Natural killer cell (primary cell): ENCODE measurements at regions of chr9 and their contacts with region 1.

Region 1: GRCh38 chr9:114291064-114291474 is 31.8 kb upstream of the ORM1 start:
- DNase-seq: peak; percentile 62 to 77
- ATAC-seq: peak; percentile 64 to 79 (median 66)
- H3K4me3 ChIP-seq: no peak overlapping the region
- H3K4me3 Mint-ChIP-seq: no peak overlapping the region
- H3K27ac ChIP-seq: no peak overlapping the region
- H3K27ac Mint-ChIP-seq: no peak overlapping the region
- H3K4me1 ChIP-seq: peaks cover 3% of the 10 kb centered on the region
- H3K4me1 Mint-ChIP-seq: peaks cover 0 to 5% of the 10 kb centered on the region in 2 donors
- H3K27me3 ChIP-seq: peaks cover 2% of the 10 kb centered on the region
- H3K27me3 Mint-ChIP-seq: peaks cover 20 to 32% of the 10 kb centered on the region in 2 donors
- CTCF ChIP-seq: peak; percentile 97

Region 2: GRCh38 chr9:114082017-114082762 is 208.9 kb before region 1 on chr9:
- intact Hi-C with region 1: loop called (anchors 1 kb)
- DNase-seq: peak; percentile 69 to 86
- ATAC-seq: peak; percentile 63 to 93 (median 70)
- H3K4me3 ChIP-seq: no peak overlapping the region
- H3K4me3 Mint-ChIP-seq: no peak overlapping the region
- H3K27ac ChIP-seq: no peak overlapping the region
- H3K27ac Mint-ChIP-seq: no peak overlapping the region
- H3K4me1 ChIP-seq: no peaks in the 10 kb centered on the region
- H3K4me1 Mint-ChIP-seq: no peaks in the 10 kb centered on the region
- H3K27me3 ChIP-seq: no peaks in the 10 kb centered on the region
- H3K27me3 Mint-ChIP-seq: peaks cover 0 to 3% of the 10 kb centered on the region in 2 donors
- CTCF ChIP-seq: peak; percentile 88

Region 3: DNA sequence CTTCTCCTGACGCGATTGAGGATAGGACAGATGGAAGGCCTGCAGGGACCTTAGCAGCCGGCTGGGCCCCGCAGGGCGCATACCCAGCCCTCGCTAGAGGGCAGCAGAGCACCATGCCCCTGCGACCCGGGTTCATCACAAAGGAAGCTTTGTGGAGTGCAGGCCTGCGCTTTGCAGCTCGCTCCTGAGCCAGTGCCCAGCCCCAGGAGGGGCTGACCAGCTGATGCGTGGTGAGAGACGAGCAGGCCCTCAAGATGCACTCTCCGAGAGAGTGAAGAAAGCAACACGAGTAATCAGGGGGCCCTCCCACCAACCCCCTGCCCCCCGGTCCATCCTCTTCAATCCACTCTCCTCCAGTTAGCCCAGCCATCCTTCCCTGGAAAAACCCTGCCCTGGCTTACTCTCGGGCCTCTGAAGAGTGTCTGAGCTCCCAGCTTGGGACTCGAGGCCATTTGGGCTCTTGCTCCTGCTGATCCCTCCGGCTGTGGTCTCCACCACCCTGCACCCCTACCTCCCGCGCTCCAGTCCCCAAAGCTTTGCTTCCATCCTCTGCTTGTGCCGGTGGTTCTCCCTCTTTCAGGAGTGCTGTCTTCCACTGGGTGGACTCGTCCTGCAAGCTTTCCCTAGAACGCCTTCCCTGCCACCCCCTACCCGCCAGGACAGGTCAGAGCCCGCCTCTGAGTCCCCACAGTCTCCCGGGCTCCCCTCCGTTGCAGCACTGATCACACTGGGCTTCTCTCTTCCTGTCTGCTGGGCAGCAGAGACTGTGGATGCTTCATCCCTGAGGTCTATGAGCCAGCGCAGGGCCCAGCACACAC is 182.8 kb before region 1 on chr9:
- intact Hi-C with region 1: loop called (anchors 5 kb)
- DNase-seq: peak in 1 of 2 donors; percentile 67
- ATAC-seq: peak; percentile 36 to 76 (median 62)
- H3K4me3 ChIP-seq: no peak overlapping the region
- H3K4me3 Mint-ChIP-seq: no peak overlapping the region
- H3K27ac ChIP-seq: no peak overlapping the region
- H3K27ac Mint-ChIP-seq: no peak overlapping the region
- H3K4me1 ChIP-seq: no peaks in the 10 kb centered on the region
- H3K4me1 Mint-ChIP-seq: no peaks in the 10 kb centered on the region
- H3K27me3 ChIP-seq: no peaks in the 10 kb centered on the region
- H3K27me3 Mint-ChIP-seq: peaks cover 24 to 25% of the 10 kb centered on the region in 2 donors
- CTCF ChIP-seq: peak; percentile 47

Region 4: DNA sequence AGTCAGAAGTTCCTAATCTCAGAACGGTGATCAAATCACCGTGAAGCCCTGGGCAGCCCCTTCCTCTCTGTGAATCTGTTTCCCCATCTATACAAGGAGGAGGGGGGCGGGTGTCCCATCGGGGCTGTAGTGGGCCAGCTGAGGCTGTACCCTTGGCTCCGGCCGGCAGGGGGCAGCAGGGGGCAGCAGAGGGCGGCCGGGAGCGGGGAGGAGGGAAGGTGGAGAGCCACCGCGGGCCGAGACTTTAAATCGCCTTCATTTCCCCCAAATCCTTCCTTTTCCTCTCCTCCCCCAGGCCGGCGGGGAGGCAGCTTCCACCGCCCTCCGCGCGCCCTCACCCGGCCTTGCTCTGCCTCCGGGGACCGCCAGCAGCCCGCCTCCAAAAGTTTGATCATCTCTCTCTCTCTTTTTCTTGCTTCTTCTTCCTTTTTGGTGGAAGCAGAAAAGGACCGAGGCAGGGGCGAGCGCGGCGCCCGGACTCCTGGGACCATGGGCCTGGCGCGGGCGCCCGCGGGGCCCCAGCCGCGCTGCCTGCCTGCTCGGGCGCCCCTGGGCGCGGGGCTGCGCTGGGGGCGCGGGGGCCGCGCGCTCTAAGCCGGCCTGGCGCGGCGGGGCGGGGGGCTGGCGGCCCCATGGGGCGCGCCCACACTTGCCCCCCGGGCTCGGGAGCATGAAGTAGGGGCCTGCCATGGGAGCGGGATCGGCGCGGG is 135.7 kb before region 1 on chr9 and contains the start of gene COL27A1:
- intact Hi-C with region 1: loop called (anchors 2 kb)
- DNase-seq: peak; percentile 66 to 79
- ATAC-seq: peak; percentile 86 to 98 (median 97)
- H3K4me3 ChIP-seq: peak within 1 kb of the TSS; percentile 34
- H3K4me3 Mint-ChIP-seq: peak within 1 kb of the TSS; percentile 89
- H3K27ac ChIP-seq: no peak within 1 kb of the TSS
- H3K27ac Mint-ChIP-seq: no peak within 1 kb of the TSS
- H3K4me1 ChIP-seq: peaks cover 18% of the 10 kb centered on the region
- H3K4me1 Mint-ChIP-seq: peaks cover 11 to 18% of the 10 kb centered on the region in 2 donors
- H3K27me3 ChIP-seq: peaks cover 30% of the 10 kb centered on the region
- H3K27me3 Mint-ChIP-seq: peaks cover 43 to 56% of the 10 kb centered on the region in 2 donors
- CTCF ChIP-seq: peak; percentile 72
- total RNA-seq, gene COL27A1: not detected

Region 5: DNA sequence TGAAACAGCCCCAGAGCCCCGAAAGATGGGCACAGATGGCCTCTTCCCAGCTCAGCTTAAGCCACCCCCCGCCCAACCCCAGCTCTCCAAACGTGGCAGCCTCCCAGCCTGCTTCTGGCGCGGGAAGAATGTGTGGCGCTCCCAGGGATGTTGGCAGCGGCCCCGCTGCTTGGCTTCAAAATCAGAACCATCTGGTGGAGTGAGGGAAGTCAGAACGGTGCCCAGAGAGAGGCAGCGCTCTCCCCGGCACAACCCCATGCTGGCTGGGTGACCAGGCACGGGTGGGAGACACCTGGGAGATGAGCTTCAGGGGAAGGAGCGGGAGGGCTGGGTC is 40.9 kb before region 1 on chr9:
- intact Hi-C with region 1: no loop called
- DNase-seq: no peak
- ATAC-seq: no peak
- H3K4me3 ChIP-seq: no peak overlapping the region
- H3K4me3 Mint-ChIP-seq: no peak overlapping the region
- H3K27ac ChIP-seq: no peak overlapping the region
- H3K27ac Mint-ChIP-seq: no peak overlapping the region
- H3K4me1 ChIP-seq: no peaks in the 10 kb centered on the region
- H3K4me1 Mint-ChIP-seq: no peaks in the 10 kb centered on the region
- H3K27me3 ChIP-seq: no peaks in the 10 kb centered on the region
- H3K27me3 Mint-ChIP-seq: peaks cover 0 to 3% of the 10 kb centered on the region in 2 donors
- CTCF ChIP-seq: no peak

Region 6: GRCh38 chr9:114611516-114612271 is 320.6 kb after region 1 on chr9:
- intact Hi-C with region 1: no loop called
- DNase-seq: peak in 1 of 2 donors; percentile 71
- ATAC-seq: peak; percentile 74 to 80 (median 75)
- H3K4me3 ChIP-seq: peak overlapping the region; percentile 77
- H3K4me3 Mint-ChIP-seq: peak overlapping the region; percentile 90
- H3K27ac ChIP-seq: peak overlapping the region; percentile 83
- H3K27ac Mint-ChIP-seq: peak overlapping the region; percentile 74 to 88
- H3K4me1 ChIP-seq: peaks cover 31% of the 10 kb centered on the region
- H3K4me1 Mint-ChIP-seq: peaks cover 21 to 29% of the 10 kb centered on the region in 2 donors
- H3K27me3 ChIP-seq: no peaks in the 10 kb centered on the region
- H3K27me3 Mint-ChIP-seq: no peaks in the 10 kb centered on the region
- CTCF ChIP-seq: no peak